Gastrocnemius medialis (tissue), 4 donors: ENCODE measurements at regions of chr1 and their contacts with region 1.

Region 1: DNA sequence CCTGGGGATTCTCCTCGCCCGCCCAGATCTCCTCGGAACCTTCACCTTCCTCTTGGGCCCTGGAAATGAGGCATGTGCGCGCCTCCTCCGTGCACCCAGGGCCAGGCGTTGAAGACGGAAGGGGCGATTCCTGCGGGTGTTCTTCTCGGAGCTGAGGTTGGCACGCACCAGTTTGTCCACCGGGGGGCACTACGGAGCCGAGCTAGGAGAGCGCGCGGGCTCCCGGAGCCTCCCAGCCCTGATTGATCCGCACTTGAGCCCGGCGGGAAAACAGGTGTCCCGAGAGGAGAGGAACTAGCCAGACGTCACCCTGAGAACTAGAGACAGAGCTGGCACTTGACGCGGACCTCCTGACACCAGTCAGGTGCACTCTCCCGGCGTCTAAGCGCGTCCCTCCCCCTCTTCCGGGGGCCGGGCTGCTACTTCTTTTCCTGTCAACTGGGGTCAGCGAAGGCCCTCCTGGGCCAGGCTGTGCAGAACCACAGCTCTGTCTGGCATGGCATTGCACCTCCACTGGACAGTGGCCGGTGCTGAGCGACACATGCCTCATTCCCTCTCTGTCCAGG is 18.3 kb upstream of the SERINC2 start:
- DNase-seq: peak; percentile 96 to 99
- ATAC-seq: peak; percentile 98 to 99
- H3K4me3 ChIP-seq: peak overlapping the region; percentile 14 to 44 (median 22)
- H3K27ac ChIP-seq: peak overlapping the region; percentile 81 to 90 (median 86)
- H3K4me1 ChIP-seq: peaks cover 5 to 8% of the 10 kb centered on the region in 2 donors
- H3K27me3 ChIP-seq: no peaks in the 10 kb centered on the region
- CTCF ChIP-seq: peak; percentile 91 to 97 (median 95)
- POLR2A ChIP-seq: peak; percentile 53 to 66

Region 2: DNA sequence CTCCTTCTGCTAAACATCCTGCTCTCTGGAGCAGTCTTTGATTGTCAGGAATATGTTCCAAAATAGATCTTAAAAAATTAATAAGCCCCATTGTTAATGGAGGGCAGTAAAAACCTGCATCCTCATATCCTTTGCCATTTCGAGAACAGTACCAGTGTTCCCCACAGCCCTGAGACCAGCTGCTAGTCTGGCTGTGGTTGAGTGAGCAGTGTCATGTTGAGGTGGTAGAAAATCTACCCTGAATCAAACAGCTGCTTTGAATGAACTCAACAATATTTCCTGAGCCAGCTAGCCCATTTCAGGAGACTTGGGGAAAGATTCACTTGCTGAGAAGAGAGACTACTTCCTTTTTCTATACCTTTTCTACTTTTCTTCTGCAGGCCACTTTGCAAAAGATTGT is 46.3 kb before region 1 on chr1:
- in situ Hi-C with region 1: no loop called
- intact Hi-C with region 1: loop called (anchors 1 kb)
- DNase-seq: no peak
- ATAC-seq: no peak
- H3K4me3 ChIP-seq: no peak overlapping the region
- H3K27ac ChIP-seq: no peak overlapping the region
- H3K4me1 ChIP-seq: no peaks in the 10 kb centered on the region
- H3K27me3 ChIP-seq: no peaks in the 10 kb centered on the region
- CTCF ChIP-seq: no peak
- POLR2A ChIP-seq: no peak

Region 3: GRCh38 chr1:31413405-31414125 is 18.9 kb after region 1 on chr1:
- in situ Hi-C with region 1: no loop called
- intact Hi-C with region 1: loop called (anchors 1 kb)
- DNase-seq: peak; percentile 81 to 90
- ATAC-seq: peak; percentile 76 to 78
- H3K4me3 ChIP-seq: peak overlapping the region; percentile 74 to 95 (median 90)
- H3K27ac ChIP-seq: peak overlapping the region; percentile 93 to 99 (median 98)
- H3K4me1 ChIP-seq: peaks cover 5 to 15% of the 10 kb centered on the region in 2 donors
- H3K27me3 ChIP-seq: no peaks in the 10 kb centered on the region
- CTCF ChIP-seq: no peak
- POLR2A ChIP-seq: peak; percentile 60 to 69

Region 4: DNA sequence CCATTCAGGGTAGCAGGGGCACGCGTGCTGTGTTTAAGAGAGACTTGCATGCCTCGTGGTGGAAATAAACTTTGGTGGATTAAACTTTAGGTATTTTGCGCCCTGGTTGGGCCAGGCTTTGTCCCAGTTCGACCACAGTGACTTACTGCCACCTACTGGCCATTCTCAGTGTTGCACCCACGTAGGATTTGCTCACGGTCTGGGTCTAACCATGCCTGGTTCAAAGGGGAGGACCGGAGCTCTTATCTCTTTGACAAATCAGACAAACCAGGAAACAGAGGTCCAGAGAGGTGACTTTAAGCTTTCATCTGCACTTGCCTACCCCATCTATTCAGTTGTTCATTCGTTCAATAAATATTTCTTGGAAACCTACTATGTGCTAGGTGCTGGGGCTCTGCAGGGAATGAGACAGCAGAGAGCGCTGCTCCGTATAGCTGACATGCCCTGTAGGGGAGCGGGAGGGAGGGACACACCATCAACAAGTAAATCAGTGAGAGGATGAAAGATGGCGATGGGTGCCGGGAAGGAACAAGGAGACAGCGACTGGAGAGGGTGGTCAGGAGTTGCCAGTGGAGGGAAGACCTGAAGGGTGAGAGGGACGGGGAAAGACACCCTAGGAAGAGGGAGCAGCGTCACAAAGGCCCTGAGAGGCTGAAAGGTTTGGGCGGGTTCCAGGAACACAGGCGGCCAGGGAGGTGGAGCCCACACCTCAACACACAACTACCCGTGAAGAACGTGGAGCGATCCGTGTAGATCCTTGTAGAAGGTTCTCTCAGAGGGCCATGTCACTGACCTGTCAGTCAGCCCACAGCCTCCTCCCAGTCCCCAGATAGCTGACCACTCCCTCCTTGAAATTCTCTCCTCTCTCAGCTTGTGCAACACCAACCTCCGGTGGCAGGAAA is 154.4 kb after region 1 on chr1:
- in situ Hi-C with region 1: no loop called
- intact Hi-C with region 1: loop called (anchors 2 kb)
- DNase-seq: peak; percentile 60 to 82
- ATAC-seq: peak; percentile 83 to 86
- H3K4me3 ChIP-seq: peak overlapping the region in 3 of 4 donors; percentile 8 to 31 (median 23)
- H3K27ac ChIP-seq: peak overlapping the region; percentile 65 to 79 (median 74)
- H3K4me1 ChIP-seq: peaks cover 14 to 16% of the 10 kb centered on the region in 2 donors
- H3K27me3 ChIP-seq: no peaks in the 10 kb centered on the region
- CTCF ChIP-seq: peak; percentile 87 to 96 (median 93)
- POLR2A ChIP-seq: no peak

Region 5: DNA sequence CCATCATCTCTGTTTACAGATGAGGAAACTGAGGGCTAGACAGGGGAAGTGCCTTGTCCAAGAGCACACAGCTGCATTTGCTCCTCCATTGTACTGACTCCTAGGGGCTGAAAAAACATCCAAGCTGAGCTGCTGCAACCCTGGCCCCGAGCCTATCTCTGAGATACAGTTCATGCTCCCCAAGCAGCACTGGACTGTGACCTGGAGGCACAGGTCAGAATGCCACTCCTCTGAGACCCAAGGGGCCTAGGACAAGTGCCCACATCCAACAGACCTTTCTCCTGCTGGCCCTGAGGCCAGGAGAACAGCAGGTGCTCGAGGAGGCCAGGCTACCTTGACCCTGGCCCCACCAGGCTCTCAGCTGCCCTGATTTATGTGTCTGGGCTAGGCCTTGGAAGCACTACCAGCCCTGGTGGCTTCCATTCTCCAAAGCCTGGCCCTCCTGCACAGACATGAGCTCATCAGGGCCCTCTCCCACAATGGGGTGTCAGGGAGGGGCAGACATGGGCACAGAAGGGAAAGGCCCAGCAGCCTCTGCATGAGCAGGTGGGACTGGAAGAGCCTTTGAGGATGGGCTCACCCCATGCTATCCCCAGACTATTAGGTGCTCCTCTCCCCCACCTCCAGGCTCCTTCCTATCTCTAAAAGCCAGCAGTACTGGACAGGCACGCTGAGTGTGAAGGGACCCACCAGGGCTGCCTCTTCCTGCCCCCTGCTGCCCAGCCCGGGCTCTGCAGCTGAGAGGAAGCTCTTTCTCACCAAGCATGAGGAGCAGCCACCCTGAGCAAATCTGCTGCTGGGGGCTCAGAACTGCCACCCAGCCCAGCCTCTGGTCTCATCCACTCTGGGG is 350.6 kb after region 1 on chr1:
- in situ Hi-C with region 1: no loop called
- intact Hi-C with region 1: no loop called
- DNase-seq: peak in 1 of 2 donors; percentile 29
- ATAC-seq: peak; percentile 30 to 46
- H3K4me3 ChIP-seq: no peak overlapping the region
- H3K27ac ChIP-seq: no peak overlapping the region
- H3K4me1 ChIP-seq: peaks cover 0 to 1% of the 10 kb centered on the region in 2 donors
- H3K27me3 ChIP-seq: no peaks in the 10 kb centered on the region
- CTCF ChIP-seq: peak in 4 of 5 experiments; percentile 53 to 72 (median 62)
- POLR2A ChIP-seq: no peak